ENCODE measurements at regions of chr4 and their contacts with region 1.

Region 1: GRCh38 chr4:126144838-126145237 is 830.1 kb downstream of the FAT4 start:
- DNase-seq: no peak
- ATAC-seq: no peak
- H3K4me3 ChIP-seq: no peak overlapping the region
- H3K27ac ChIP-seq: no peak overlapping the region
- H3K4me1 ChIP-seq: no peaks in the 10 kb centered on the region
- H3K27me3 ChIP-seq: no peaks in the 10 kb centered on the region
- CTCF ChIP-seq: no peak

Region 2: GRCh38 chr4:125808570-125808969 is 336.3 kb before region 1 on chr4:
- intact Hi-C with region 1: no loop called
- DNase-seq: no peak
- ATAC-seq: no peak
- H3K4me3 ChIP-seq: no peak overlapping the region
- H3K27ac ChIP-seq: peak overlapping the region in 2 of 10 donors; percentile 8 to 16
- H3K4me1 ChIP-seq: no peaks in the 10 kb centered on the region
- H3K27me3 ChIP-seq: no peaks in the 10 kb centered on the region
- CTCF ChIP-seq: no peak

Region 3: GRCh38 chr4:125904802-125905201 is 240.0 kb before region 1 on chr4:
- intact Hi-C with region 1: no loop called
- DNase-seq: no peak
- ATAC-seq: no peak
- H3K4me3 ChIP-seq: no peak overlapping the region
- H3K27ac ChIP-seq: no peak overlapping the region
- H3K4me1 ChIP-seq: no peaks in the 10 kb centered on the region
- H3K27me3 ChIP-seq: no peaks in the 10 kb centered on the region
- CTCF ChIP-seq: no peak

Region 4: GRCh38 chr4:126081336-126081735 is 63.5 kb before region 1 on chr4:
- intact Hi-C with region 1: no loop called
- DNase-seq: no peak
- ATAC-seq: no peak
- H3K4me3 ChIP-seq: no peak overlapping the region
- H3K27ac ChIP-seq: no peak overlapping the region
- H3K4me1 ChIP-seq: no peaks in the 10 kb centered on the region
- H3K27me3 ChIP-seq: no peaks in the 10 kb centered on the region
- CTCF ChIP-seq: no peak

Region 5: DNA sequence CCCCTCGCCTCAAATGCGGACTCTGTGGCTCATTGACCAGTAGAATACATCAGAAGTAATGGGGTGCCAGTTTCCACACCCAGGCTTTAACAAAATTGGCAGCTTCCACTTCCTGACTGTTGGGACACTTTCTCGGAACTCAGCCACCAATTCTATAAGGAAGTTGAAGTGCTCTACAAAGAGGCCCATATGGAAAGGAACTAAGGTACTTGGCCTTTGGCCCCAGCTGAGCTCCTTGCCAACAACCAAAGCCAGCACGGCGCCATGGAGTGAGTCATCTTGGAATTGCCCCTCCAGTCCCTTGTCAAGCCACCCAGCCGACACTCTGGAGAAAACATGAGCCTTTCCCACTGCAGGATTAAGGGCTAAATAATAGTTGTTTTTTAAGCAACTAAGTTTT is 1225.8 kb after region 1 on chr4:
- intact Hi-C with region 1: loop called in 1 of 10 experiments (anchors 5 kb)
- DNase-seq: peak; percentile 14 to 21
- ATAC-seq: peak in 6 of 8 donors; percentile 35 to 75 (median 64)
- H3K4me3 ChIP-seq: no peak overlapping the region
- H3K27ac ChIP-seq: peak overlapping the region in 2 of 10 donors; percentile 1 to 38
- H3K4me1 ChIP-seq: peaks cover 0 to 9% (median 0%) of the 10 kb centered on the region in 9 donors
- H3K27me3 ChIP-seq: no peaks in the 10 kb centered on the region
- CTCF ChIP-seq: no peak